Sigmoid colon (tissue), 7 donors: ENCODE measurements at regions of chr6 and their contacts with region 1.

Region 1: GRCh38 chr6:30960907-30961673 is 20.3 kb downstream of the MUCL3 start:
- DNase-seq: no peak
- H3K4me3 ChIP-seq: no peak overlapping the region
- H3K27ac ChIP-seq: no peak overlapping the region
- H3K4me1 ChIP-seq: peaks cover 0 to under 1% (median under 1%) of the 10 kb centered on the region in 4 donors
- H3K27me3 ChIP-seq: peaks cover 0 to 47% (median 0%) of the 10 kb centered on the region in 3 donors
- CTCF ChIP-seq: no peak
- EP300 ChIP-seq: no peak
- POLR2A ChIP-seq: no peak

Region 2: DNA sequence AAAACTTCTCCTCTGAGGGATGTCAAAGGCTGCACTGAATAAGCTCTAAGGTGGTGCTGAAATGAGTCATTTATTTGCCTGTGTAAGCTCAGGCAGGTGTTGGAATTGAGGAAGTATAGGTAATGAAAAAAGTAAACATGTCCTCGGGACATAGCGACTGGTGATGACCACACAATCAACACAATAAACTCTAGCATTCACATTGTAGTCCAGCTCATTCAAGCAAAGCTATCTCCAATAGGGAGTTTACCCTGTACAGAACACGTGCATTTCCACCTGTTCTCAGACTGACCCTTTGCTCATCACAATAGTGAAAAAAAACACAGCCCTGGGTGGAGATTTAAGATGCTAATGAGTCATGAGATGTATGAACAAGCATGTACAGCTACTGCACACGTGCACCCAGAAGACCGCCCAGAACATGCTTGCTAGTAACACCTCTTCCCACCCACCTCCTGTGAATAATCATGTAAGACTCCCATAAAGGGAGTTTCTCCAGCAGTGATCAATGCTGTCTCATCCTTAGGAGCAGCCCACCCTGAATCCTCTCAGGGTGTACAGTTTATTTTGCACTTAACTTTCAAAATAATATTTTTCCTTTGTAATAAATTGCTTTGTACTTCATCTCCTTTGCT is 242.4 kb after region 1 on chr6:
- intact Hi-C with region 1: no loop called
- DNase-seq: no peak
- H3K4me3 ChIP-seq: peak overlapping the region; percentile 27 to 54 (median 50)
- H3K27ac ChIP-seq: peak overlapping the region; percentile 76 to 85 (median 80)
- H3K4me1 ChIP-seq: peaks cover 0 to 34% (median 16%) of the 10 kb centered on the region in 4 donors
- H3K27me3 ChIP-seq: no peaks in the 10 kb centered on the region
- CTCF ChIP-seq: no peak
- EP300 ChIP-seq: no peak
- POLR2A ChIP-seq: no peak

Region 3: DNA sequence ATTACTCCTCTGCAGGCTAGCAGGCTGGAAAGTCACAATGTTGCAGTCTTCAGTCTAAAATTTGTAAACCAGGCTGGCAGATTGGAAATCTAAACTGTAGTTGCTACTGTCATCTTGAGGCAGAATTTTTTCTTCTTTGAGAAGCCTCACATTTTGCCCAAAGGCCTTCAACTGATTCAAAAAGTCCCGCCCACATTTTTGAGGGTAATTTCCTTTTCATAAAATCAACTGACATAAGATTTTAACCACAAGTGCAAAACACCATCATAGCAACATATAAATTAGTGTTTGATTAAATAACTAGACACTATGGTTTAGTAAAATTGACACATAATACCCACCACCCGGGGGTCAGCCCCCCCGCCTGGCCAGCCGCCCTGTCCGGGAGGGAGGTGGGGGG is 282.4 kb after region 1 on chr6:
- intact Hi-C with region 1: loop called (anchors 5 kb)
- DNase-seq: no peak
- H3K4me3 ChIP-seq: no peak overlapping the region
- H3K27ac ChIP-seq: no peak overlapping the region
- H3K4me1 ChIP-seq: no peaks in the 10 kb centered on the region
- H3K27me3 ChIP-seq: peaks cover 0 to 7% (median 0%) of the 10 kb centered on the region in 3 donors
- CTCF ChIP-seq: no peak
- EP300 ChIP-seq: no peak
- POLR2A ChIP-seq: no peak